H1 (cell line): ENCODE measurements at regions of chr20 and their contacts with region 1.

Region 1: DNA sequence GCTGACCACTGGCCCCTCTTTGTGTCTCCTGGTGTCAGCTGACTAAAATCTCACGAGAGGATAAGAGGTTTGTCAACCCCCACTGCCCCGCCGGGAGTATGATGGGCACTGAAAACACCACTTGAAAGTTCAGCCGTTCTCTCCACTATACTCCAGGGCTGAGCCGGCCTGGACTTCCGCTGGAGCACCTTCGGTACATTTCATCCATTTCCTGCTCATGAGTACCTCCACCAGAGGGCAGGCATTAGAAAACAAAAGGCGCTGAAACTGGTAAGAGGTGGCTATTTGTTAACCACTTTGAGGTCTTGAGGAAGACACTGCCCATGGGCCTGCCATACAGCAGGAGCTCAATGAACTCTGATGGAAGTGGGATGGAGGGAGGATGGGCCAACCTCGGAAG is 17.9 kb upstream of the ANKRD60 start:
- DNase-seq: no peak
- H3K4me3 ChIP-seq: no peak overlapping the region
- H3K27ac ChIP-seq: no peak overlapping the region
- H3K4me1 ChIP-seq: no peaks in the 10 kb centered on the region; a peak in 2 of 7 replicates
- H3K27me3 ChIP-seq: no peaks in the 10 kb centered on the region
- CTCF ChIP-seq: peak; percentile 13 to 63 (median 57)
- EP300 ChIP-seq: no peak
- POLR2A ChIP-seq: no peak
- RAD21 ChIP-seq: peak; percentile 53 to 66

Region 2: GRCh38 chr20:58141971-58142781 is 104.2 kb before region 1 on chr20:
- CTCF ChIA-PET with region 1: no interaction called
- POLR2A ChIA-PET with region 1: no interaction called
- DNase-seq: no peak
- H3K4me3 ChIP-seq: no peak overlapping the region
- H3K27ac ChIP-seq: no peak overlapping the region
- H3K4me1 ChIP-seq: no peaks in the 10 kb centered on the region; a peak in 1 of 7 replicates
- H3K27me3 ChIP-seq: no peaks in the 10 kb centered on the region; a peak in 2 of 7 replicates
- CTCF ChIP-seq: no peak
- EP300 ChIP-seq: no peak
- POLR2A ChIP-seq: no peak
- RAD21 ChIP-seq: no peak

Region 3: GRCh38 chr20:58260006-58260405 is 13.7 kb after region 1 on chr20:
- CTCF ChIA-PET with region 1: interaction called, 15 read pairs
- POLR2A ChIA-PET with region 1: no interaction called
- DNase-seq: no peak
- H3K4me3 ChIP-seq: no peak overlapping the region
- H3K27ac ChIP-seq: no peak overlapping the region
- H3K4me1 ChIP-seq: peaks cover 2 to 10% (median 3%) of the 10 kb centered on the region in 4 experiments; a peak in 5 of 7 replicates
- H3K27me3 ChIP-seq: no peaks in the 10 kb centered on the region
- CTCF ChIP-seq: no peak
- EP300 ChIP-seq: no peak
- POLR2A ChIP-seq: no peak
- RAD21 ChIP-seq: no peak

Region 4: GRCh38 chr20:58361481-58362205 is 115.3 kb after region 1 on chr20:
- CTCF ChIA-PET with region 1: interaction called, 16 read pairs
- POLR2A ChIA-PET with region 1: interaction called, 3 read pairs
- DNase-seq: no peak
- H3K4me3 ChIP-seq: no peak overlapping the region
- H3K27ac ChIP-seq: no peak overlapping the region
- H3K4me1 ChIP-seq: no peaks in the 10 kb centered on the region
- H3K27me3 ChIP-seq: no peaks in the 10 kb centered on the region
- CTCF ChIP-seq: no peak
- EP300 ChIP-seq: no peak
- POLR2A ChIP-seq: no peak
- RAD21 ChIP-seq: no peak

Region 5: GRCh38 chr20:58863031-58863790 is 616.9 kb after region 1 on chr20:
- CTCF ChIA-PET with region 1: no interaction called
- POLR2A ChIA-PET with region 1: no interaction called
- DNase-seq: no peak
- H3K4me3 ChIP-seq: no peak overlapping the region
- H3K27ac ChIP-seq: no peak overlapping the region
- H3K4me1 ChIP-seq: no peaks in the 10 kb centered on the region
- H3K27me3 ChIP-seq: no peaks in the 10 kb centered on the region
- CTCF ChIP-seq: no peak
- EP300 ChIP-seq: no peak
- POLR2A ChIP-seq: no peak
- RAD21 ChIP-seq: no peak